Thyroid gland (tissue), 4 donors: ENCODE measurements at regions of chr14 and their contacts with region 1.

Region 1: GRCh38 chr14:63760014-63760413 is 32.1 kb upstream of the SGPP1 start:
- DNase-seq: no peak
- H3K4me3 ChIP-seq: no peak overlapping the region
- H3K27ac ChIP-seq: no peak overlapping the region
- H3K4me1 ChIP-seq: no peaks in the 10 kb centered on the region
- H3K27me3 ChIP-seq: no peaks in the 10 kb centered on the region
- CTCF ChIP-seq: no peak
- POLR2A ChIP-seq: no peak

Region 2: DNA sequence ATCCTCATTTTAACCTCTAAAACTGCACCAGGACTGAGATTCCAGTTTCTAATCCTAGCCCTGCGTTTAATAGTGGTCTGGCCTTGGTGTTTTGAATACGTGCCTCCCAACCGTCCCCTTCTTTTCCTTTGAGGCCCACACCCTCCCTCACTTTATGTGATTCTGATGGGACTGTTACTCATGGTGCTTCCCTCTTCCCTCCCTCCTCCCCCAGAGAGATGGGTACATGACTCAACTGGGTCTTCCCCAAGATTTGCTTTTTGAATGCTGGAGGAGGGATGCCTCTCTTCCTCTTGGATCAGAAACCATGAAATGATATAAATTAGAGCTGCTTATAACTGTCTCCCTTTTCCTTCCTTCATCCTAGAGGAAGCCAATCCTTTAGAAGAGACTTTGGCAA is 208.7 kb before region 1 on chr14:
- intact Hi-C with region 1: loop called (anchors 10 kb)
- DNase-seq: no peak
- H3K4me3 ChIP-seq: no peak overlapping the region
- H3K27ac ChIP-seq: no peak overlapping the region
- H3K4me1 ChIP-seq: no peaks in the 10 kb centered on the region
- H3K27me3 ChIP-seq: no peaks in the 10 kb centered on the region
- CTCF ChIP-seq: no peak
- POLR2A ChIP-seq: no peak

Region 3: DNA sequence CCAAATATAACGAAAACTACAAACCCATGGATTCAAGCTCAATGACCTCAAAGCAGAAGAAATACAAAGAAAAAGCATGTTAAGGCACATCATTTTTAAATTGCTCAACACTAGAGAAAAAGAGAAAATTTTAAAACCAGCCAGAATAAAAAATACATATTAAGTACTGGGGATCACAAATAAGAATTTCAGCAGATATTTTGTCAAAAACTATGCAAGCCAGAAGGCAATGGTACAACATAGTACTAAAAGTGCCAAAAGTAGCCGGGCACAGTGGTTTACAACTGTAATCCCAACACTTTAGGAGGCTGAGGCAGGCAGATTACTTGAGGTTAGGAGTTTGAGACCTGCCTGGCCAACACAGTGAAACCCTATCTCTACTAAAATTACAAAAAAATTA is 42.3 kb before region 1 on chr14:
- intact Hi-C with region 1: no loop called
- DNase-seq: no peak
- H3K4me3 ChIP-seq: no peak overlapping the region
- H3K27ac ChIP-seq: no peak overlapping the region
- H3K4me1 ChIP-seq: no peaks in the 10 kb centered on the region
- H3K27me3 ChIP-seq: no peaks in the 10 kb centered on the region
- CTCF ChIP-seq: no peak
- POLR2A ChIP-seq: no peak